CD4-positive, alpha-beta T cell (primary cell): ENCODE measurements at regions of chr6 and their contacts with region 1.

Region 1: GRCh38 chr6:31580807-31581433 is 1.3 kb downstream of the LTB start:
- DNase-seq: peak; percentile 77 to 93 (median 90)
- ATAC-seq: peak; percentile 66
- H3K4me3 ChIP-seq: peak overlapping the region; percentile 97
- H3K4me3 Mint-ChIP-seq: peak overlapping the region; percentile 97
- H3K27ac ChIP-seq: peak overlapping the region; percentile 82 to 95
- H3K27ac Mint-ChIP-seq: peak overlapping the region; percentile 85
- H3K4me1 ChIP-seq: peaks cover 82% of the 10 kb centered on the region
- H3K4me1 Mint-ChIP-seq: peaks cover 84% of the 10 kb centered on the region
- H3K27me3 ChIP-seq: no peaks in the 10 kb centered on the region
- H3K27me3 Mint-ChIP-seq: no peaks in the 10 kb centered on the region
- CTCF ChIP-seq: peak; percentile 98

Region 2: DNA sequence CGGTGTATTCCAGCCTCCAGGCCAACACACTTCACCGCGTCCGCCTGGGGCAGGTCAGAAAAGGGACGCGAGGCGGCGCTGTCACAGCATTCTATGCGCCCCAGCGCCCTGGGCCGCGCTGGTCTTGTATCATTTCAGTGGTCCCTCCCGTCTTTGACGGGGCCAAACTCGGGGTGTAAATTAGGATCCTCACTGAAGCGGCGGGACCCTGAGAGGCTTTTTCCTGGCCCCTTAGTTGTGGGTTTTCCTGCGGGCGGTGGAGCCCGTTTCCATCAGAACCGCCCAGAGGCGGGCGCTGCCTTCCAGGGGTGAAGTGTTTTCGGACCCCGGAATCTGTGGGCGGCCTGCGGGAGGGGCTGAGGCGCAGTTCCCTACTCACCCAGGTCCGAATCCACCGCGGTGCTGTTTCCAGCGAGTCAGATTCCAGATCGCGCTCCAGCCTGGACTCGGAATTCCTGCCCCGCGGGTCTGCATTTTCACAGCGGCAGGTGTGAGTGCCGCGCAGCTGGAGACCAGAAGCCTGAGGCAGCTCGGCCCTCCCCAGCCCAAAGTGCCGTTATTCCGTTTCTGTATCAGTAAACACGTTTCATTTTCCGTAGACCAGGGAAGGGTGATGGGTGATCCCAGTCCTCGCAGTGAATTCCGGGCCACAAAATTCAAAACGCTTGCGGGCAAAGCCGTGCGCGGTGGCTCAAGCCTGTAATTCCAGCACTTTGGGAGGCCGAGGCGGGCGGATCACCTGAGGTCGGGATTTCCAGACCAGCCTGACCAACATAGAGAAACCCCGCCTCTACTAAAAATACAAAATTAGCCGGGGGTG is 86.8 kb before region 1 on chr6:
- CTCF ChIA-PET with region 1: interaction called, 8 read pairs
- POLR2A ChIA-PET with region 1: interaction called, 13 read pairs
- intact Hi-C with region 1: no loop called
- DNase-seq: peak; percentile 51 to 91 (median 74)
- ATAC-seq: peak; percentile 39
- H3K4me3 ChIP-seq: peak overlapping the region; percentile 88
- H3K4me3 Mint-ChIP-seq: peak overlapping the region; percentile 58
- H3K27ac ChIP-seq: peak overlapping the region; percentile 65 to 68
- H3K27ac Mint-ChIP-seq: peak overlapping the region; percentile 83
- H3K4me1 ChIP-seq: peaks cover 69% of the 10 kb centered on the region
- H3K4me1 Mint-ChIP-seq: peaks cover 57% of the 10 kb centered on the region
- H3K27me3 ChIP-seq: no peaks in the 10 kb centered on the region
- H3K27me3 Mint-ChIP-seq: no peaks in the 10 kb centered on the region
- CTCF ChIP-seq: peak; percentile 80

Region 3: DNA sequence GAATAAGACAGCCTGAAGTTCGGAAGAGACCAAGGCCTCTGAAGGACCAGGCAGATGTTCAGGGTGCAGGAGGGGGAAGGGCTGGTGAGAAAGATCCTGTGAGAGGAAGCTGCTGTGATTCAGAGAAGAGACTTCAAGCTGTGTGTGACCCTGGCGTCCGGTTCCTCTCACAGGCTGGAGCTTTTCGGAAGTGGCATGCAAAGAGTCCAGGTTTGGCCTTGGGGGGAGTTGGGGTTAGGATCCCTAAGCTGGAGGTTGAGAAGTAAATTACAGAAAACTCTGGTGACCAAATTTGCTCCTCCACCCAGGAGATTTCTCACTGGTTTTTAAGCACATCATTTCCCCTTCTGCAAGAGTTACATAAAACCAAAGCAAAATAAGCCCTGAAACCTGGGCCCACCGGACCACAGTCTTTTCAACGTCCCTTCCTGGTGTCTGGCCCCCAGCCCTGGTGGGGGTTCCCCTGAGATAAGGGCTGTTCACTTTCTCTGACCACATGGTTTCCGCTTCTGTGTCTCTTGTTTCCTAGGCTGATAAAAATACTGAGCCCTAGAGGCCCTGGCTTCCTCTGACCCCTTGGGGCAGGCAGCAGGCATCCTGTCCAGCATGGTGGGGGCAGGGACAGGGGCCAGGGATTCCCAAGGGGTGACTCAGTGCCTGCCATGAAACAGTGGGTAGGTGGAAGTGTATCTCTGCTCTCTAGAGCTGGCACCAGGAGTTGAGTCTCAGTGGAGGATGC is 20.8 kb before region 1 on chr6:
- CTCF ChIA-PET with region 1: interaction called, 11 read pairs
- POLR2A ChIA-PET with region 1: interaction called, 1,160 read pairs
- intact Hi-C with region 1: loop called (anchors 2 kb)
- DNase-seq: peak in 7 of 14 experiments; percentile 29 to 81 (median 65)
- ATAC-seq: peak; percentile 58
- H3K4me3 ChIP-seq: peak overlapping the region; percentile 44
- H3K4me3 Mint-ChIP-seq: peak overlapping the region; percentile 82
- H3K27ac ChIP-seq: peak overlapping the region; percentile 63 to 74
- H3K27ac Mint-ChIP-seq: peak overlapping the region; percentile 90
- H3K4me1 ChIP-seq: peaks cover 72% of the 10 kb centered on the region
- H3K4me1 Mint-ChIP-seq: peaks cover 62% of the 10 kb centered on the region
- H3K27me3 ChIP-seq: no peaks in the 10 kb centered on the region
- H3K27me3 Mint-ChIP-seq: no peaks in the 10 kb centered on the region
- CTCF ChIP-seq: no peak

Region 4: DNA sequence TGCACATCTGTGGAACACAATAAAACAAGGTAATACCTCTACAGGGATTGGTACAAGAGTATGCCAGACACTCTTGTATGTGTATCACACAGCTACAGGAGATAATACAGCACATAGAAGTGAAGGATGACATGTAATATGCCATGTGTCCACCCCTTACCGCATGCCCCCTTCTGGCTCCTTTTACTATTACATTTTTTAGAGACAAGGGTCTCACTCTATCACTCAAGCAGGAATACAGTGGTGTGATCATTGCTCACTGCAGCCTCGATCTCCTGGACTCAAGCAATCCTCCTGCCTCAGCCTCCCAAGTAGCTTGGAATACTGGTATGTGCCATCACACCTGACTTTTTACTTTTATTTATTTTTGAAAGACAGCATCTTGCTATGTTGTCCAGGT is 16.1 kb after region 1 on chr6:
- CTCF ChIA-PET with region 1: interaction called, 353 read pairs
- POLR2A ChIA-PET with region 1: interaction called, 1,160 read pairs
- intact Hi-C with region 1: loop called (anchors 1 kb)
- DNase-seq: peak in 9 of 14 experiments; percentile 26 to 85 (median 45)
- ATAC-seq: peak; percentile 89
- H3K4me3 ChIP-seq: no peak overlapping the region
- H3K4me3 Mint-ChIP-seq: peak overlapping the region; percentile 7
- H3K27ac ChIP-seq: no peak overlapping the region
- H3K27ac Mint-ChIP-seq: peak overlapping the region; percentile 70
- H3K4me1 ChIP-seq: peaks cover 60% of the 10 kb centered on the region
- H3K4me1 Mint-ChIP-seq: peaks cover 40% of the 10 kb centered on the region
- H3K27me3 ChIP-seq: no peaks in the 10 kb centered on the region
- H3K27me3 Mint-ChIP-seq: no peaks in the 10 kb centered on the region
- CTCF ChIP-seq: peak; percentile 76

Region 5: DNA sequence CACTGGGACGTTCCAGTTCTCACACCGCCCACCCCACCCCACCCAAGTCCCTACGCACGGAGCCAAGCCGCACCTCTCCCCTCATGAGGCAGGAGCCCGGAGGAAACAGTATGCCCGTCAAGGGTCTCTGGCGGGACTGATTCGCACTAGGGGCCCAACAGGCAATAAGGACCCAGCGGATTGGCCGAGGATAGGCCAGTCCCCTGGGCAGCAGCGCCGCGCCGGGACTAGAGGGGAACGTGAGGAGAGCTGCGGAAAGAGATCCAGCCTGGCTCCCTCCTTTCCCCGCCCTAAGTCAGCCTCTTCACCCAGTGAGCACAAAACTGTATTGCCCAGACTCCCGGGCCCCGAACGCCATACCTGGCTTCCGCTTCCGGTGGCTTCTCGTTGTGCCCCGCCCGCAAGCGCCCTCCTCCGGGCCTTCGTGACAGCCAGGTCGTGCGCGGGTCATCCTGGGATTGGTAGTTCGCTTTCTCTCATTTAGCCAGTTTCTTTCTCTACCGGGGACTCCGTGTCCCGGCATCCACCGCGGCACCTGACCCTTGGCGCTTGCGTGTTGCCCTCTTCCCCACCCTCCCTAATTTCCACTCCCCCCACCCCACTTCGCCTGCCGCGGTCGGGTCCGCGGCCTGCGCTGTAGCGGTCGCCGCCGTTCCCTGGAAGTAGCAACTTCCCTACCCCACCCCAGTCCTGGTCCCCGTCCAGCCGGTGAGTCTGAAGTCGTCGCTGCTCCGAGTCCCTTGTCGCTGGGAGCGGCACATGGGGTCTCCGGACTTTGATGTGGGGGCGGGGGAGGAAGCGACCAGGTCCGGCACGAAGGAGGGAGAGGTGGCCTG is 84.8 kb after region 1 on chr6 and contains the start of gene CSNK2B:
- CTCF ChIA-PET with region 1: no interaction called
- POLR2A ChIA-PET with region 1: interaction called, 15 read pairs
- intact Hi-C with region 1: no loop called
- DNase-seq: peak; percentile 94 to 99 (median 97)
- ATAC-seq: peak; percentile 85
- H3K4me3 ChIP-seq: peak within 1 kb of the TSS; percentile 79
- H3K4me3 Mint-ChIP-seq: peak within 1 kb of the TSS; percentile 95
- H3K27ac ChIP-seq: peak within 1 kb of the TSS; percentile 93 to 96
- H3K27ac Mint-ChIP-seq: peak within 1 kb of the TSS; percentile 97
- H3K4me1 ChIP-seq: peaks cover 61% of the 10 kb centered on the region
- H3K4me1 Mint-ChIP-seq: peaks cover 51% of the 10 kb centered on the region
- H3K27me3 ChIP-seq: no peaks in the 10 kb centered on the region
- H3K27me3 Mint-ChIP-seq: no peaks in the 10 kb centered on the region
- CTCF ChIP-seq: no peak
- total RNA-seq, gene CSNK2B: 88.0 to 92.6 TPM